ENCODE measurements at regions of chr14 and their contacts with region 1.

Region 1: GRCh38 chr14:22276913-22277816 is 311.9 kb downstream of the DAD1 start:
- DNase-seq: no peak
- H3K4me3 ChIP-seq: no peak overlapping the region
- H3K4me3 Mint-ChIP-seq: peak overlapping the region in 1 of 8 donors; percentile 16
- H3K27ac ChIP-seq: no peak overlapping the region
- H3K27ac Mint-ChIP-seq: no peak overlapping the region
- H3K4me1 ChIP-seq: no peaks in the 10 kb centered on the region
- H3K4me1 Mint-ChIP-seq: no peaks in the 10 kb centered on the region
- H3K27me3 ChIP-seq: no peaks in the 10 kb centered on the region
- H3K27me3 Mint-ChIP-seq: no peaks in the 10 kb centered on the region

Region 2: DNA sequence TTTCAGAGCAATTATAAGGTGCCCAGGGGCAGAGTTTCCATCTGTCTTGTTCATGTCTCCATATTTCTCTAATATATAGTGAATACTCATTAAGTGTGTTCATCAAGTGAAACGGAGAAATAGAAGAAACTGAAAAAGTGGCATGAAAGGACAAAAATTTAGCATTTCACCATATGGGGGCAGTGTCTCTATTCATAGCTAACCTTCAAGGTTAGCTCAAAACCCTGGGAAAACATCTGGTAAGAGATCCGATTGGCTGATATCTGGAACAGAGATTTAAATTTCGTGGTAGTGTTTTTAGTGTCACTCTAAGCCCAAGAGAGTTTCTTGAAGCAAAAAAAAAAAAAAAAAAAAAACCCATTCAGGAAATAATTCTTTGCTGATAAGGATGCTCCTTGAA is 55.7 kb before region 1 on chr14:
- CTCF ChIA-PET with region 1: no interaction called
- POLR2A ChIA-PET with region 1: no interaction called
- intact Hi-C with region 1: loop called (anchors 5 kb)
- DNase-seq: peak in 1 of 5 donors; percentile 21
- H3K4me3 ChIP-seq: no peak overlapping the region
- H3K4me3 Mint-ChIP-seq: peak overlapping the region in 7 of 8 donors; percentile 54 to 76 (median 67)
- H3K27ac ChIP-seq: no peak overlapping the region
- H3K27ac Mint-ChIP-seq: peak overlapping the region in 3 of 7 donors; percentile 67 to 84 (median 70)
- H3K4me1 ChIP-seq: no peaks in the 10 kb centered on the region
- H3K4me1 Mint-ChIP-seq: peaks cover 1 to 7% (median 6%) of the 10 kb centered on the region in 4 donors
- H3K27me3 ChIP-seq: no peaks in the 10 kb centered on the region
- H3K27me3 Mint-ChIP-seq: no peaks in the 10 kb centered on the region

Region 3: GRCh38 chr14:22319526-22320361 is 42.6 kb after region 1 on chr14:
- CTCF ChIA-PET with region 1: no interaction called
- POLR2A ChIA-PET with region 1: no interaction called
- intact Hi-C with region 1: no loop called
- DNase-seq: peak in 2 of 5 donors; percentile 4 to 43
- H3K4me3 ChIP-seq: no peak overlapping the region
- H3K4me3 Mint-ChIP-seq: peak overlapping the region; percentile 57 to 83 (median 74)
- H3K27ac ChIP-seq: no peak overlapping the region
- H3K27ac Mint-ChIP-seq: peak overlapping the region in 4 of 7 donors; percentile 13 to 71 (median 51)
- H3K4me1 ChIP-seq: no peaks in the 10 kb centered on the region
- H3K4me1 Mint-ChIP-seq: no peaks in the 10 kb centered on the region
- H3K27me3 ChIP-seq: no peaks in the 10 kb centered on the region
- H3K27me3 Mint-ChIP-seq: no peaks in the 10 kb centered on the region

Region 4: GRCh38 chr14:22929104-22929847 is 652.1 kb after region 1 on chr14 and contains the start of gene PRMT5:
- CTCF ChIA-PET with region 1: no interaction called
- POLR2A ChIA-PET with region 1: no interaction called
- intact Hi-C with region 1: no loop called
- DNase-seq: peak; percentile 98 to 100 (median 99)
- H3K4me3 ChIP-seq: peak within 1 kb of the TSS; percentile 83 to 99
- H3K4me3 Mint-ChIP-seq: no peak within 1 kb of the TSS
- H3K27ac ChIP-seq: peak within 1 kb of the TSS; percentile 91
- H3K27ac Mint-ChIP-seq: peak within 1 kb of the TSS in 1 of 7 donors; percentile 75
- H3K4me1 ChIP-seq: peaks cover 17% of the 10 kb centered on the region
- H3K4me1 Mint-ChIP-seq: peaks cover 9 to 14% (median 12%) of the 10 kb centered on the region in 4 donors
- H3K27me3 ChIP-seq: no peaks in the 10 kb centered on the region
- H3K27me3 Mint-ChIP-seq: no peaks in the 10 kb centered on the region
- total RNA-seq, gene PRMT5: 25.8 to 30.5 TPM

Measured in CD4-positive, alpha-beta memory T cell (primary cell).